Left colon (tissue), 2 donors: ENCODE measurements at regions of chr7 and their contacts with region 1.

Region 1: GRCh38 chr7:104225451-104225850 is 17.6 kb upstream of the ORC5 start:
- DNase-seq: no peak
- ATAC-seq: no peak

Region 2: DNA sequence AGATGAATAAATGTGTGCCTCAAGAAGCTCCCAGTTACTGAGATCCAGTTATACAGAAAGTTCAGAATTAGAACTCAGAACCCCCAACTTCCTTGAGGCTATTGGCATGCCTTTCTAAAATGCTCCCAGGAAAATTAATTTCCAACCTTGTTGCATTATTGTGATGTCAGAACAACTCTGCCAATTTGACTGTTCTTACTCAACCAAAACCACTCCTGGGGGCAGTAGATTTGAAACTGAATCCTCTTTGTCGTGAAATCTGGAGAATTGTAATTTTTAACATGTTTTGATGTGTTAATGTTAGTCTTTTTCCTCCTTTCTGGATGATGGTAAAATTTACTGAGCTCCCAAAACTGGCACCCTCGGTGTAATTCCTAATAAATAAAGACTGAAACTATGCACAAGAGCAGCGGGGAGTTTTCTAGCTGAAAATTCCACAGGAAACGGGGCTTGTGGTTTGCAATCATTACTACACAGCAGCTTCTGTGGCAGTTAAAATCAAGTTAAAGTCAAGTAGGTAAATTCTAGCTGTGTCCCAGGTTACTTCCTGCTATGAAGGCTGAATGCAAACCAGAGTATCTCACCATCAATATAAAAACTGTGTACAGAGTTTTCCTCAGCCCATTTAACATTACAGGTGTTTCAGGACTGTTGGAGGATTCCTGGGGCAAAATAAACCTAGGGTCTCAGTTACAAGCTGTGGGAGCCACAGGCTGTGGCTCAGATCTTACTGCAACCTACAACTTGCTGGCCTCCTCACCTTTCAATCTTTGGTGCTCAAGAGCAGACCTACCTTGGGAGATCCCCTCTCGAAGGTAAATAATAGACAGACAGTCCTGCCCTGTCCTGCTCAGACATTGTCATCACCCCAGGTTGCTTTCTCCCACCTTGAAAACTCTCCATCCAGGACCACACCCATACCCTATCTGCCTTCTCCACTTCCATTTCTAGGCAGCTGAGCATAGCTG is 632.3 kb after region 1 on chr7:
- intact Hi-C with region 1: loop called in 1 of 2 experiments (anchors 10 kb)
- DNase-seq: no peak
- ATAC-seq: no peak